ENCODE measurements at regions of chr18 and their contacts with region 1.

Region 1: DNA sequence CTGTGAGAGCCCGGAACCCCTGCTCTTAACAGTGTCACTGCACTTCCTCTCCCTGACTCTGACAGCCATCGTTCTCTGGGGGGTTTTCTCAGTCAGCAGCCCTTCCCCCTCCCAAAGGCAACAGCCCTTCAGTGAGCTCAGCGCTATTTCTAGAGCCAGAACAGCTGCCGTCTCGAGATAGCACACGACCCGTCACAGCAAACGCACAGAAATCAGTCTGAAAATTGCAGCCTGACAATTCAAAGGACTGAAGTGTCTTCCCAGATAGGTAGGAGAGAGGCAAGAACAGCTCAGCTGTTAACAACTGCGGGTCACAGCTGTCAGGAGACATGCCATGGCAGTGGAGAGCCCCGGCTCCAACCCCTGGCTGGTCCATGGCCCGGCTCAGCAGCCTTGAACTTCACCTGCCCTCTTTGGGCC is 45.4 kb downstream of the ST8SIA5 start:
- DNase-seq: no peak

Region 2: DNA sequence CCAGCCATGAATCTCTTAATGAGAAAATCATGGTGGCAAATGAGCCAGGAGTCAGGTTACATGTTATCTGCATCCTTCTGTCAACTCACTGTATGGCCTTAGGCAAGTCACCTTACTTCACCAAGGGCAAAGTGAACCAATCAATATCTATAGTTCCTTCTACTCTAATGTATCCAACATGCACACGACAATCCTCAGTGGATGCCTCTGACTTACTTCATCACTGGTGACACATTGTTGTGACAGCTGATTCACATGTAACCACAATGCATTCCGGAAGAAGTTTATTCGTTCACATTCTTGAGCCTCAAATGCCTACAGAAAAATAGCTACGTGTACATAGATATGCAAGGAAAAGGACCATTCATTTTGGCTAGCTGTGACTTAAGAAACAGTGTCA is 718.1 kb before region 1 on chr18:
- intact Hi-C with region 1: no loop called
- DNase-seq: no peak

Region 3: DNA sequence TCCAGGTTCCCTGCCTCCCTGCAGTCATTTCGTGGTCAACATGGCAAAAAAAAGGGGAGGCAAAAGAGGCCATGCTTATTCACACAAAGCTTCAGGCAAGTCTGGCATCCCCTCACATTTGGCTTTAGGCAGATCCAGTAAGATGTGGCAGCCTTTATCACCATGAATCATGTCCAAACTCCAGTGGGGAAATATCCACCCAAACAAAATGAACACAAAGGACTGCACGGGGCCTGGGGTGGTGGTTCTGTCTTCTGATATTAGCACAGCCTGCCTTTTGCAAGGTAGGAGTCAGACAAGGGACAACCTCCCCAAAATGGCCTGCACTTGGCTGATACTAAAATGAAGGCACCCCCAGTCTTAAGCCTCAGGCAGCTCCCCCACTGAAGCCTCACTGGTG is 1567.9 kb after region 1 on chr18:
- intact Hi-C with region 1: loop called in 1 of 2 experiments (anchors 5 kb)
- DNase-seq: no peak

Measured in posterior vena cava (tissue), 2 donors.